ENCODE measurements at regions of chr7 and their contacts with region 1.

Region 1: DNA sequence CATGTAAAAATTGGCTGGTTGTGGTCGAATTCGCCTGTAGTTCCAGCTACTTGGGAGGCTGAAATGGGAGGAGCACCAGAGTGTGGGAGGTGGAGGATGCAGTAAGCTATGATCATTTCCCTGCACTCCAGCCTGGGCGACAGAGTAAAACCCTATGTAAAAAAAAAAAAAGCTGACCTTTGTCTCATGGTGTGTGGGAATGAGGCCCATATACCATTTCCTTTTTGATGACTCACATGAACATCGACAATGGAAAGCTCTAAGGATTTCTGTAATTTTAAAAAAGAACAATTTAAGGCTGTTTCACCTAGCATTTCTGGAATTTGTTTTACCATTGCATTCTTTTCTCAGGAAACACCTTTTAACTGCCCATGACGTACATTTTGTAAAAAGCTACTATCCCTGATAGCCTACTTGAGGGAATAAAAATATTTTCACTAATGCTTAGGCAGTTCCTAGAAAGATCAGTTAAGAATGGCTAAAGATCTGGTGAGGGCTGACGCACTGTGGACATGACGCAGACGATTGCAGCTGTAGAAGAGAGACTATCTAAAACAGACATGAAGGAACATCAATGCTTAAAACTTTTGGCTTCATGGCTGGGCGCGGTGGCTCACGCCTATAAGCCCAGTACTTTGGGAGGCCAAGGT is 400.6 kb upstream of the IGFBP3 start:
- DNase-seq: no peak
- H3K4me3 ChIP-seq: no peak overlapping the region
- H3K27ac ChIP-seq: no peak overlapping the region
- H3K4me1 ChIP-seq: no peaks in the 10 kb centered on the region
- H3K27me3 ChIP-seq: no peaks in the 10 kb centered on the region
- CTCF ChIP-seq: no peak
- POLR2A ChIP-seq: no peak

Region 2: DNA sequence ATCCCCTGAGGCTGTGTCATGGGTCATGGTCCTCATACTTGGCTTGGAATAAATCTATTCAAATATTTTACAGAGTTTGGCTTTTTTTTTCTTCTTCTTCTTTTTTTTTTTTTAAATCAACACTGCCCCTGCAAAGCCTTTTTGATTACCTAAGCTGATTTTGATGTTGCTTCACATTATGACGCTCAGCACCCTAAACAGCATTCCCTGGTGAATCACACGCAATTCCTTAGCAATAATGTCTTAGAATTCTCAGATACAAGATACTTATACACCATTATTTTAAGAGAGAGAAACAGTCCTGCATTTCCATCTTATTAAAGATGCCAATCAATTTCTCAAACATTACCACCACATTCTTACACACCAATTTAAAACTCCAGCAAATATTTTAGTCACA is 76.9 kb before region 1 on chr7:
- intact Hi-C with region 1: loop called (anchors 5 kb)
- DNase-seq: no peak
- H3K4me3 ChIP-seq: no peak overlapping the region
- H3K27ac ChIP-seq: no peak overlapping the region
- H3K4me1 ChIP-seq: no peaks in the 10 kb centered on the region
- H3K27me3 ChIP-seq: no peaks in the 10 kb centered on the region
- CTCF ChIP-seq: no peak
- POLR2A ChIP-seq: no peak

Region 3: GRCh38 chr7:46291064-46291463 is 30.6 kb before region 1 on chr7:
- intact Hi-C with region 1: no loop called
- DNase-seq: no peak
- H3K4me3 ChIP-seq: no peak overlapping the region
- H3K27ac ChIP-seq: peak overlapping the region; percentile 71
- H3K4me1 ChIP-seq: peaks cover 16% of the 10 kb centered on the region
- H3K27me3 ChIP-seq: no peaks in the 10 kb centered on the region
- CTCF ChIP-seq: no peak
- POLR2A ChIP-seq: no peak

Region 4: DNA sequence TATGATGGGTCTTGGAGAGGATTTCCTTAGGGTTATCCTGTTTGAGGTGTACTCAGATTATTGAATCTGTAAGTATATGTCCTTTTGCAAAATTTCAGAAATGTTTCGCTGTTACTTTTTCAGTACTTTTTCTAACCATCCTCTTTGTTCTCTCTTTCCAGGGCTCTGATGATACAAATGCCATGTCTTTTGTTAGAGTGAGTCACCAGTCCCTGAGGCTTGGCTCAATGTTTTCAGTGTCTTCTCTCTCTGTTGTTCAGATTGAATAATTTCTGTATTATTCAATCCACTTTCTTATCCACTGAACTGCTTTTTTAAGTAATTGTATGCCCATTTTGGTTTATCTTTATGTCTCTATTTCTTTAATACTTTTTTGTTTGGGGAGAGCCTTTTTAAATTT is 810.8 kb after region 1 on chr7:
- intact Hi-C with region 1: no loop called
- DNase-seq: no peak
- H3K4me3 ChIP-seq: no peak overlapping the region
- H3K27ac ChIP-seq: no peak overlapping the region
- H3K4me1 ChIP-seq: no peaks in the 10 kb centered on the region
- H3K27me3 ChIP-seq: no peaks in the 10 kb centered on the region
- CTCF ChIP-seq: no peak
- POLR2A ChIP-seq: no peak

Measured in vagina (tissue), 2 donors.